Posterior vena cava (tissue), 2 donors: ENCODE measurements at regions of chr9 and their contacts with region 1.

Region 1: DNA sequence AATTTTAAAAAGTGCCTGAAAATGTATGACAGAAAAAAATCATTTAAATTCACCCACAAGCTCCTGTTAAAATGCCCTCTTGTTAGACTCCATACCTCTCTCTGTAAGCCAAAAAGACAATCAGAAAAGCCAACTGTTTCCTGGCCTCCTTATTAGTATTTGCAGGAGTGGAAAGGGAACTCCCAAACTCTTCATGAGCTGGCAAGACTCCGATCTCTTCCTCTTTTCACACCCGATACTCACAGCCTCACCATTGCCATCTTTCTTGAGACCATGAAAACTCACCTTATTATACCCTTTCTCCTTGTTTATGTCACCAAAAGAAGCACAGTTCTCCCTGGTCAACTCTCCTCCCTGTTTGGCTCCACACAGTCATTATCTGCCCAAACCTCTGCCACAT is 197.8 kb downstream of the DMAC1 start:
- DNase-seq: no peak

Region 2: DNA sequence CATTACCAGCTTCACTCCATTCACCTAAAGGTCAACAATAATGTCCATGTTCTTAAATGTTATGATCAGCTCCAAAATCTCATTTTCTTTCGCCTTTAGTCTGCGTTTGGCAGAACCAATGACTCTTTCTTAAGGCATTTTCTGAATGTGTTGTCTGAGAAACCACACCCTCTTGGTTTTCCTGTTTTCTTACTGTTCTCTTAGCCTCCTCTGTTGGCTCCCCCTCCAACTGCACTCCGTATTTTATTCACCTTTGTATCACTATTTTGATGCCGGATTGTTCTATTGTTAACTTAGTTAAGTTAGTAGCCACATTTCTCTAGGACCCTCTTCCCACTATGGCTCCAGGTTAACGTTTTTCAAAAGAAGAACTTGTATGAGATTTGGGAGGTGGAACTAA is 12.2 kb after region 1 on chr9:
- intact Hi-C with region 1: loop called in 1 of 2 experiments (anchors 1 kb)
- DNase-seq: no peak